ENCODE measurements at regions of chr21 and their contacts with region 1.

Region 1: DNA sequence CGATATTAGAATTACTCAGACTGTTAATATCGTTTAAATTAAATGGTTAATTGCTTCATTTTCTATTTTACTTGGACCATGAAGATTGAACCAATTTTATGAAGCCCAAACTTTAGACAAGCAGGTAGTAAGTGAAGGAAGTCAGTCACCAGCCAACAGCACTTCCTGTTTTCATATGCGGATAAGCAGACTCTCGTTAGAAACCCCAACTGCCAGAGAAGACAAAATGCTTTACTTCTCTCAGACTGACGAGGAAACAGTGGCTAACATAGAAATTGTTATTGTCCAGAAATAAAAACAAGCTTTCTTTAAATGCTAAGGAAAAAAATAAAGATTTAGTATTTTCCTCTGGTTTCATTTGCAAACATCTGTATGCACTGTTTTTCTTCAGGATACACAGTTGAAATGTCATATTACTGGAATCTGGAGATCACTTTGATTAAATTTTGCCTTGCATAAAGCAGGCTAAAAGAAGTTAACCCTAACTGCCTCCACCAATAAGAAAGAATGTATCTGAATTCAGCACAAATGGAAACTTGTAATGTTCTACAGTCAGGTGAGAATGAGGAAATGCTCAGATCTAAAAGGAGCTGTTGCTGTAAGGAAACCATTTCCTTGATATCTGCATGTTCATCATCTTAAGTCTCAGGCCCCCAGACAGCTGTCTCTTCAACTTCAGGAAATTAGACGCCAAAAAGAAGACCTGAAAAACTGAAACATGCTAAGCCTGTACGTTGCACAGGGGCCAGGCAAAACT is 129.8 kb upstream of the SAMSN1 start:
- DNase-seq: no peak
- ATAC-seq: no peak
- H3K4me3 ChIP-seq: no peak overlapping the region
- H3K27ac ChIP-seq: no peak overlapping the region
- H3K4me1 ChIP-seq: no peaks in the 10 kb centered on the region
- H3K27me3 ChIP-seq: no peaks in the 10 kb centered on the region
- CTCF ChIP-seq: no peak

Region 2: DNA sequence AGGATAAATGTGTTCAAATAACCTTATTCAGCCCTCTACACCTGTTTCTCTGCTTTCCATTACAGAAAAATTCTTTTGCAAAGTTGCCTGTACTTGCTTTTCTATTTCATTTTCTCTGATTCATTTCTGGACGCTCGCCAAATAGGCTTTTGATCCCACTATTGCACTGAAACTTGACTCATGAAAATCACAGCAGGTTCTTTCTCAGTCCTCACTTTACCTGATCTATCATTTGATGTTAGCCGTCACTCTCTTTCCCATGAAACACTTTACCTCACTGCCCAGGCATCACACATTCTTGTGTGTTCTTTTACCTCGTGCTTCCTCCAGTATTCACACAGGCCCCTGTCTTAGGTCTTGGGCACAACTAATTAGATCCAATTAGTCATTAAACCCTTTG is 319.2 kb before region 1 on chr21:
- intact Hi-C with region 1: no loop called
- DNase-seq: no peak
- ATAC-seq: no peak
- H3K4me3 ChIP-seq: no peak overlapping the region
- H3K27ac ChIP-seq: no peak overlapping the region
- H3K4me1 ChIP-seq: no peaks in the 10 kb centered on the region
- H3K27me3 ChIP-seq: no peaks in the 10 kb centered on the region
- CTCF ChIP-seq: no peak

Region 3: DNA sequence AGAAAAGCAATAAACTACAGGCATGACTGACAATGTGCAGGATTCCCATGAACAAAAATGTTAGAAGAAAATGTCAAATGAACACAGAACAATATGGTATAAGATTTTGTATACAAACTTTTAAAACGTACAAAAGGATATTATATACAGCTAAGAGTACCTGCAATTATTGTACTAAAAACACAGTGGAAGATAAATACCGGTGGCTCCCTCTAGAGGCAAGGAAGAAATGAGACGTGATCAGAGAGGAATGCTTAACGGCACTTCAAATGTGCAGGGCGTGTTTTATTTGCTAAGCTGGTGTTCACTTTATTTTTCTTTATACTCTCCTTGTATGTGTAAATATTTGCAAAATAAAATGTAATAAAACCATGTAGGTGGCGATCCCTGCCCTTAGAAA is 62.0 kb after region 1 on chr21:
- intact Hi-C with region 1: loop called in 1 of 2 experiments (anchors 10 kb)
- DNase-seq: no peak
- ATAC-seq: no peak
- H3K4me3 ChIP-seq: no peak overlapping the region
- H3K27ac ChIP-seq: no peak overlapping the region
- H3K4me1 ChIP-seq: no peaks in the 10 kb centered on the region
- H3K27me3 ChIP-seq: no peaks in the 10 kb centered on the region
- CTCF ChIP-seq: peak; percentile 32

Region 4: DNA sequence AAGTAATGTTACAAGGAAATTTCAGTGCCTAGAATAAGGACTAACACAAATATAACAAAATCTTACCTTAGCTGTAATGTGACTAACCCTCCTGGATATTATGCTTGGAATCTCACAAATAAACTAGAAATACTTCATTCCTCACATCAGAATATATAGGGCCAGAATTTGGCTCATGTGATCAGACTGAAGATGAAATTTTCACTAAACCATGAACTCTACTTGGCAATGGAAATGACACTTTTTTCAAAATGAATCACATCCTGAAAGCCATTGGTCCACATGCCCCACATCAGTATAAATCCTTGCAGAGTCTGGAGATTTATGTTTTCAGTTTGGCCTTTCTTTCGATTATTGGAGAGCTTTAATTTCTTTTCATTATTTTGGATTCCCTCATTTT is 161.0 kb after region 1 on chr21:
- intact Hi-C with region 1: no loop called
- DNase-seq: no peak
- ATAC-seq: no peak
- H3K4me3 ChIP-seq: no peak overlapping the region
- H3K27ac ChIP-seq: no peak overlapping the region
- H3K4me1 ChIP-seq: no peaks in the 10 kb centered on the region
- H3K27me3 ChIP-seq: no peaks in the 10 kb centered on the region
- CTCF ChIP-seq: no peak

Region 5: GRCh38 chr21:16007943-16008342 is 1332.0 kb after region 1 on chr21:
- intact Hi-C with region 1: no loop called
- DNase-seq: no peak
- ATAC-seq: no peak
- H3K4me3 ChIP-seq: no peak overlapping the region
- H3K27ac ChIP-seq: no peak overlapping the region
- H3K4me1 ChIP-seq: no peaks in the 10 kb centered on the region
- H3K27me3 ChIP-seq: no peaks in the 10 kb centered on the region
- CTCF ChIP-seq: no peak